ENCODE measurements at regions of chr3 and their contacts with region 1.

Region 1: GRCh38 chr3:9205345-9206143 is 43.9 kb downstream of the SRGAP3 start:
- DNase-seq: no peak
- ATAC-seq: no peak
- H3K4me3 ChIP-seq: no peak overlapping the region
- H3K27ac ChIP-seq: no peak overlapping the region
- H3K4me1 ChIP-seq: peaks cover 4% of the 10 kb centered on the region
- H3K27me3 ChIP-seq: no peaks in the 10 kb centered on the region
- CTCF ChIP-seq: no peak

Region 2: GRCh38 chr3:8405144-8405543 is 800.4 kb before region 1 on chr3:
- intact Hi-C with region 1: no loop called
- DNase-seq: no peak
- ATAC-seq: no peak
- H3K4me3 ChIP-seq: no peak overlapping the region
- H3K27ac ChIP-seq: no peak overlapping the region
- H3K4me1 ChIP-seq: no peaks in the 10 kb centered on the region
- H3K27me3 ChIP-seq: no peaks in the 10 kb centered on the region
- CTCF ChIP-seq: no peak

Region 3: DNA sequence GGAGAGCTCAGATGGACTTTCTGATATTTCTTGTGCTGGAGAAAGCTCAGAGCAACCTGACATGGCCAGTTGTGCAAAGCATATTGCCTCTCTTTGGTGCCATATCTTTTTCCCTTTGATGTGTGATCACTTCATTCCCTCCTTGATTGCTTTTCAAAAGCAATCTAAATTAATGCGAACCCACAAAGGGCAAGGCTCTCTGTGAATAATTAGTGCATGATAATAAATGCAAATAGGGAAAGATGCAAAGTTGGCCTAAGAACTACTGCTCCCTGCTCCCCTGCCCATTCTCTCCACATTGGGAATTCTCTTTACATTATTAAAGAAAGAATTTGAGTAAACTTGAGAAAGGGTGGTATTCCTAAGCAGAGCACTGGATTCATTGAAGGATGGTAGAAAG is 17.0 kb before region 1 on chr3:
- intact Hi-C with region 1: loop called in 1 of 2 experiments (anchors 2 kb)
- DNase-seq: no peak
- ATAC-seq: no peak
- H3K4me3 ChIP-seq: no peak overlapping the region
- H3K27ac ChIP-seq: no peak overlapping the region
- H3K4me1 ChIP-seq: peaks cover 6% of the 10 kb centered on the region
- H3K27me3 ChIP-seq: no peaks in the 10 kb centered on the region
- CTCF ChIP-seq: no peak

Region 4: GRCh38 chr3:9525078-9525477 is 319.5 kb after region 1 on chr3:
- intact Hi-C with region 1: no loop called
- DNase-seq: no peak
- ATAC-seq: no peak
- H3K4me3 ChIP-seq: no peak overlapping the region
- H3K27ac ChIP-seq: no peak overlapping the region
- H3K4me1 ChIP-seq: no peaks in the 10 kb centered on the region
- H3K27me3 ChIP-seq: peaks cover 0 to 3% (median 0%) of the 10 kb centered on the region in 3 donors
- CTCF ChIP-seq: no peak

Measured in psoas muscle (tissue), 8 donors.